ENCODE measurements at regions of chr1 and their contacts with region 1.

Region 1: DNA sequence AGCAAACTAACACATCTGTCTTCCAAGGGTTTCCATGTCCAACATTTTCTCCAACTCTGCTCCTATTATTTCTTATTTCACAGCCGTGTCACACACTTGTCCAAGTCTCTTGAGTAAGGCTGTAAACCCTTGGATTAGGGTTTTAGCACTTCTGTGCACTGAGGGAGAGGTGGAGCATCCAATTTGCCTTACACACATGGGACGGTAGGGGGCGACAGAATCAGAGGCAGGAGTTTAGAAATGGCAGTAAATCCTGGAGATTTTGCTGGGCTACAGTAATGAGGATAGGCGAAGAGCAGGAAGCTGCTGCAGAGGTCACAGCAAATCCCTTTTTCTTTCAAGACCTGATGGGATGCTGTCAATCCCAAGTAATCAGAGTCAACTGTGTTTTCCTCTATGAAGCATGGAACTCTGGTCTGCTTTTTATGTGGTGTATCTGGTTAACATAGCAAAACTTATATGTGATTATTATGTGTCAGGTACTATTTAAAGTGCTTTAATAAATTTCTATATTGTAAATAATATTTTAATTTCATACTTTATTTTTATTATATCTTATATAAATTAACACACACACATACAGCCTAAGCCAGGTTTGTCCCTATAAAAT is 15.4 kb upstream of the LCE5A start:
- DNase-seq: peak; percentile 32
- H3K4me3 Mint-ChIP-seq: no peak overlapping the region
- H3K27ac Mint-ChIP-seq: no peak overlapping the region
- H3K4me1 Mint-ChIP-seq: no peaks in the 10 kb centered on the region
- H3K27me3 Mint-ChIP-seq: no peaks in the 10 kb centered on the region

Region 2: DNA sequence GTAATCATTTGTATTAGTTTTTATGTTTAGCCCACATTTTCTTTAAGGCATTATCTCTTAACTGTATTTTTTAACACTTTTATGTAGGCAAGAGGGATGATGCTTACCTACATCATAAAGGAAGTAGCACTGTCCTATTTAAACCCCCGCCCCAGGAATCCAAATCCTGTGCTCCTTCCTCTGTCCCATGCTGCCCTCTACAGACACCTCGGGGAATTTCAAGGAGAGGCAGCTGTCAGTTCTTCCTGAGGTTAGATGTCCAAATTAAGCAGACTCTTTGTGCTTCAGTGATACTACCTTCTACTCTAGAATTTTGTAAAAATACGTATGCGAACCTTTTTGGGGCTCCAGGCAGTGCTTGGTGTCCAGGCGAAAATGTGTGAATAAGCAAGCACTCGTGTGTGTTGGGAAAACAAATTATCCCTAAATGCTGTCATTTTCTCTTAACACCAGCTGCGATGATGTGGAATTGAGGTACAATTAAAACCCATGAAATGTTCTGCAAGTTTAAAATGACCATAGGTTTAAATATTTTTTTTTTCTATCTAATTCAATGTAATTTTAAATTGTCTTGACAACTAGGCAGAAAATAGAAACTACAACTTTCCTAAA is 38.3 kb after region 1 on chr1:
- CTCF ChIA-PET with region 1: interaction called, 10 read pairs
- DNase-seq: peak; percentile 54
- H3K4me3 Mint-ChIP-seq: no peak overlapping the region
- H3K27ac Mint-ChIP-seq: no peak overlapping the region
- H3K4me1 Mint-ChIP-seq: no peaks in the 10 kb centered on the region
- H3K27me3 Mint-ChIP-seq: peaks cover 4% of the 10 kb centered on the region